Mammary epithelial cell (primary cell): ENCODE measurements at regions of chr15 and their contacts with region 1.

Region 1: GRCh38 chr15:70097337-70098169 is at the start of gene TLE3:
- DNase-seq: peak; percentile 98
- H3K4me3 ChIP-seq: peak within 1 kb of the TSS; percentile 64 to 98 (median 70)
- H3K27ac ChIP-seq: peak within 1 kb of the TSS; percentile 81
- H3K4me1 ChIP-seq: peaks cover 41% of the 10 kb centered on the region
- H3K27me3 ChIP-seq: peaks cover 8% of the 10 kb centered on the region
- CTCF ChIP-seq: peak; percentile 2 to 43
- total RNA-seq, gene TLE3: 27.6 to 32.0 TPM

Region 2: GRCh38 chr15:69523010-69524001 is 574.2 kb before region 1 on chr15:
- CTCF ChIA-PET with region 1: no interaction called
- dilution Hi-C with region 1: no loop called
- in situ Hi-C with region 1: no loop called
- intact Hi-C with region 1: loop called (anchors 2 kb)
- DNase-seq: peak; percentile 50
- H3K4me3 ChIP-seq: no peak overlapping the region
- H3K27ac ChIP-seq: no peak overlapping the region
- H3K4me1 ChIP-seq: no peaks in the 10 kb centered on the region
- H3K27me3 ChIP-seq: no peaks in the 10 kb centered on the region
- CTCF ChIP-seq: peak; percentile 79 to 80

Region 3: DNA sequence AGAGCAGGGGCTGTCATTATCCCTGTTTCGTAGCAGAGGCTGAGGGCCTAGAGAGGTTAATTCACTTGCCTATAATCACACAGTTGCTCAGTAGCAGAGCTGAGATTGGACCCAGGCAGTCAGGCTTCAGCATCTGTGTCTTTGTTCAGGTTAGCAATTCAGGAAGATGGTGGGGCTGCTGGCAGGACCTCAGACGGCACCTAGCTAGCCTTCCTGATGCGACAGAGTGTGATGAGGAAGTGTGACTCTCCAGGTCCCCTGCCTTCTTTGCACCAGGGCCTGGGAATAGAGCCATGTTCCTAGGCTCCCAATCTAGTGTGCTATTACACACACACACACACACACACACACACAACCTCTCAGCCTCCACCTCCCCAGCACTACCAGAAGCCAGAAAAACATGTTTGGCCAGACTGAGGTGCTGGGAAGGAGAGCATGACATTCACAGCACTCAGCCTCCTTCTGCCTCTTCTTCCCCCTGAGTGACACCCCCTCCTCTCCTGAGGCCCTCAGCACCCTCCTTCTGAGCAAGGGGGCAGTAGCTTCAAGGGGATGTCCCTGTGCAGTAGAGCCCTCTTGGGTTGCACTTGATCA is 88.8 kb before region 1 on chr15:
- CTCF ChIA-PET with region 1: no interaction called
- dilution Hi-C with region 1: loop called (anchors 5 kb)
- in situ Hi-C with region 1: no loop called
- intact Hi-C with region 1: no loop called
- DNase-seq: no peak
- H3K4me3 ChIP-seq: no peak overlapping the region
- H3K27ac ChIP-seq: no peak overlapping the region
- H3K4me1 ChIP-seq: no peaks in the 10 kb centered on the region
- H3K27me3 ChIP-seq: peaks cover 4% of the 10 kb centered on the region
- CTCF ChIP-seq: no peak

Region 4: GRCh38 chr15:70236341-70237086 is 139.0 kb after region 1 on chr15:
- CTCF ChIA-PET with region 1: no interaction called
- dilution Hi-C with region 1: no loop called
- in situ Hi-C with region 1: no loop called
- intact Hi-C with region 1: loop called (anchors 5 kb)
- DNase-seq: peak; percentile 92
- H3K4me3 ChIP-seq: no peak overlapping the region
- H3K27ac ChIP-seq: peak overlapping the region; percentile 53
- H3K4me1 ChIP-seq: peaks cover 27% of the 10 kb centered on the region
- H3K27me3 ChIP-seq: no peaks in the 10 kb centered on the region
- CTCF ChIP-seq: no peak

Region 5: GRCh38 chr15:70466895-70467529 is 369.5 kb after region 1 on chr15:
- CTCF ChIA-PET with region 1: no interaction called
- dilution Hi-C with region 1: no loop called
- in situ Hi-C with region 1: loop called in 1 of 2 experiments (anchors 25 kb)
- intact Hi-C with region 1: loop called (anchors 2 kb)
- DNase-seq: peak; percentile 51
- H3K4me3 ChIP-seq: no peak overlapping the region
- H3K27ac ChIP-seq: no peak overlapping the region
- H3K4me1 ChIP-seq: peaks cover 6% of the 10 kb centered on the region
- H3K27me3 ChIP-seq: peaks cover 20% of the 10 kb centered on the region
- CTCF ChIP-seq: peak; percentile 70 to 83

Region 6: DNA sequence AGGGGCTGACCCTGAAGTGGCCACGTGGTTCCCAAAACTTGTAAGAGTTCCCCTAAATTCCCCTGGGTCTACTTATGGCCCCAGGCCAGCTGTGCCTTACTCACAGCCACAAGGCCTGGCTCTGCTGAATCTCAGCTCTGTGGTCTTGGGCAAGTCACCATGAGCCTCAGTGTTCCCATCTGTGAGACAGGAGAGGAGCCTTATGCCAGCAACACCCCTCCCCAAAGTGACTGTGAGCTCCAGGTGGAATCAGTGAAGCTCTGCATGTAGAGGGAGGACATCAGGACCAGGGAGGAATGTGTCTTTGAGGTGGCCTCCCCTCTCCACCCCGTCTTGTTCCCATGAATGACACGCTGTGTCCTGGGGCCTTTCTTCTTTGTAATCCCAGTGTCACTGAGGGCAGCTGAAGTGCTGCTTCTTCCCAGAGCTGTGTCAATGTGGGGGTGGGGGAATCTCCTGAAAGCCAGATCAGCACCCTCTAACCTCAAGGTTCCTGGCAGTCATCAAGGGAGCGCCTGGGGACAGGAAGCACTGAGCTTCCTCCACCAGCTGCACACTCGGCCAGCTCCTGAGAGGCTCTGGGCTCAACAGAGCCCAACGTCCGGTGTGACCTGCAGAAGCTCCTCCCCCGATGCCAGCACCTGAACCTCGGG is 406.9 kb after region 1 on chr15:
- CTCF ChIA-PET with region 1: no interaction called
- dilution Hi-C with region 1: loop called (anchors 5 kb)
- in situ Hi-C with region 1: no loop called
- intact Hi-C with region 1: loop called (anchors 2 kb)
- DNase-seq: peak; percentile 67
- H3K4me3 ChIP-seq: no peak overlapping the region
- H3K27ac ChIP-seq: no peak overlapping the region
- H3K4me1 ChIP-seq: peaks cover 47% of the 10 kb centered on the region
- H3K27me3 ChIP-seq: peaks cover 9% of the 10 kb centered on the region
- CTCF ChIP-seq: no peak